ENCODE measurements at regions of chr11 and their contacts with region 1.

Region 1: GRCh38 chr11:111601979-111602864 is at the start of gene SIK2:
- DNase-seq: peak; percentile 90 to 97
- H3K4me3 ChIP-seq: peak within 1 kb of the TSS; percentile 83 to 93
- H3K27ac ChIP-seq: peak within 1 kb of the TSS; percentile 98 to 99
- H3K4me1 ChIP-seq: peaks cover 0 to 20% (median 11%) of the 10 kb centered on the region in 4 donors
- H3K27me3 ChIP-seq: no peaks in the 10 kb centered on the region
- CTCF ChIP-seq: peak; percentile 95 to 97

Region 2: DNA sequence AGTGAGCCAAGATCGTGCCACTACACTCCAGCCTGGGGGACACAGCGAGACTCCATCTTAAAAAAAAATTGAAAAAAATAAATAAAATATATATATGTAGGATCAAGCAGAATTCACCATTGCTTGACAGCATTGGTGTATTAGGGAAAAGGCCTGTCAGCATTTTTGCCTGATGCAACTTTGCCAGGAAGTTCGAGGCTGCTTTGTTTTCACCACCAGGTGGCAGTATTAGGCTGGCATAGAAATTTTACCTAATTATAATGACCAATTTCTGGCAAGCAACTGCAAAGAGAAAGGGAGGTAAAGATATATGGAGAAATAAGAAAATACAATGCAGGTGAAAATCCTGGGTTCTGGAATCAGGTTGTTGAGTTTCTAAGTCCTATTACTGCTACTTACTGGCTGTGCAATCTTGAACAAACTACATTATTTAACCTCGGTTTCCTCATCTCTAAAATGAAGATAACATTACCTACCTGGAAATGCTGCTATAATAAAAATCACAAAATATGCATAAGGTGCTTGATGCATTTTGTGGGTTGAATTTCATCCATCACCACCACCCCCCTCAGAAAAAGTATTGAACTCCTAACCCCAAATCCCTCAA is 37.0 kb before region 1 on chr11:
- intact Hi-C with region 1: loop called (anchors 5 kb)
- DNase-seq: peak; percentile 56 to 77
- H3K4me3 ChIP-seq: no peak overlapping the region
- H3K27ac ChIP-seq: no peak overlapping the region
- H3K4me1 ChIP-seq: peaks cover 0 to 9% (median 0%) of the 10 kb centered on the region in 4 donors
- H3K27me3 ChIP-seq: no peaks in the 10 kb centered on the region
- CTCF ChIP-seq: peak; percentile 77 to 85

Region 3: DNA sequence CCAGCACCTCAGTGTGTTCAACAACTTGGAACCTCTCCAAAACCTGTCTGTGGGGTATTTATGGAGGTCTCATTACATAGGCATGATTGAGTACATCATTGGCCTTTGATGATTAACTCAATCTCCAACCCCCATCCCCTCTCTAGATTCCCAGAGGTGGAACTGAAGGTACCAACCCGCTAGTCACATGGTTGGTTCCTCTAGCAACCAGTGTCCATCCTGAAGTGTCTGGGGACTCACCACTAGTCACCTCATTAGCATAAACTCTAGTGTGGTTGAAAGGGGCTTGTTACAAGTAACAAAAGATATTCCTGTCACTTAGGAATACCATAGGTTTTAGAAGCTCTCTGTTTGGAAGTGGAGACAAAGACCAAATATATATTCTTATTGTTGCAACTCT is 40.3 kb after region 1 on chr11:
- intact Hi-C with region 1: no loop called
- DNase-seq: no peak
- H3K4me3 ChIP-seq: no peak overlapping the region
- H3K27ac ChIP-seq: no peak overlapping the region
- H3K4me1 ChIP-seq: peaks cover 0 to 12% (median 5%) of the 10 kb centered on the region in 4 donors
- H3K27me3 ChIP-seq: no peaks in the 10 kb centered on the region
- CTCF ChIP-seq: no peak

Region 4: DNA sequence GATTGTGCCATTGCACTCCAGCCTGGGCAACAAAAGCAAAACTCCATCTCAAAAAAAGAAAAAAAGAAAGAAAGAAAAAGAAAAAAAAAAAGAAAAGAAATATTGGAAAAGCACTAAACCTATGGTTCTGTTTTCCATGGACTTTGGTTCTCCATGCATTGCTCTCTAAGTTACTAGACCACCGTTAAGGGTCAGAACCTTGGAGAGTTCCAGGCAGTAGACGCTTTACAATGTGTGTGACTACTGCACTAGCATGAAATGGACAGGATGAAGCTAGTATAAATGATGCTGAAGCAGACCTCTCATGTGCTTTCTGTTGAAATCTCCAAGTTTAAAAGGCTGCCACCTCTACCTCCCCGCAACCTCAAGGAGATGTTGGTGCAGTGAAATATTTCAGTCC is 63.6 kb after region 1 on chr11:
- intact Hi-C with region 1: no loop called
- DNase-seq: no peak
- H3K4me3 ChIP-seq: no peak overlapping the region
- H3K27ac ChIP-seq: no peak overlapping the region
- H3K4me1 ChIP-seq: peaks cover 0 to 12% (median 4%) of the 10 kb centered on the region in 4 donors
- H3K27me3 ChIP-seq: no peaks in the 10 kb centered on the region
- CTCF ChIP-seq: no peak

Region 5: GRCh38 chr11:111777094-111778046 is 175.1 kb after region 1 on chr11:
- intact Hi-C with region 1: loop called (anchors 2 kb)
- DNase-seq: no peak
- H3K4me3 ChIP-seq: no peak overlapping the region
- H3K27ac ChIP-seq: no peak overlapping the region
- H3K4me1 ChIP-seq: peaks cover 0 to 16% (median 5%) of the 10 kb centered on the region in 4 donors
- H3K27me3 ChIP-seq: no peaks in the 10 kb centered on the region
- CTCF ChIP-seq: peak; percentile 71 to 85

Region 6: GRCh38 chr11:111841370-111842053 is 239.3 kb after region 1 on chr11:
- intact Hi-C with region 1: loop called (anchors 5 kb)
- DNase-seq: peak; percentile 91
- H3K4me3 ChIP-seq: no peak overlapping the region
- H3K27ac ChIP-seq: peak overlapping the region in 1 of 2 donors; percentile 19
- H3K4me1 ChIP-seq: peaks cover 0 to 11% (median 0%) of the 10 kb centered on the region in 4 donors
- H3K27me3 ChIP-seq: no peaks in the 10 kb centered on the region
- CTCF ChIP-seq: peak; percentile 81 to 88